Prostate gland (tissue), 2 donors: ENCODE measurements at regions of chrX and their contacts with region 1.

Region 1: DNA sequence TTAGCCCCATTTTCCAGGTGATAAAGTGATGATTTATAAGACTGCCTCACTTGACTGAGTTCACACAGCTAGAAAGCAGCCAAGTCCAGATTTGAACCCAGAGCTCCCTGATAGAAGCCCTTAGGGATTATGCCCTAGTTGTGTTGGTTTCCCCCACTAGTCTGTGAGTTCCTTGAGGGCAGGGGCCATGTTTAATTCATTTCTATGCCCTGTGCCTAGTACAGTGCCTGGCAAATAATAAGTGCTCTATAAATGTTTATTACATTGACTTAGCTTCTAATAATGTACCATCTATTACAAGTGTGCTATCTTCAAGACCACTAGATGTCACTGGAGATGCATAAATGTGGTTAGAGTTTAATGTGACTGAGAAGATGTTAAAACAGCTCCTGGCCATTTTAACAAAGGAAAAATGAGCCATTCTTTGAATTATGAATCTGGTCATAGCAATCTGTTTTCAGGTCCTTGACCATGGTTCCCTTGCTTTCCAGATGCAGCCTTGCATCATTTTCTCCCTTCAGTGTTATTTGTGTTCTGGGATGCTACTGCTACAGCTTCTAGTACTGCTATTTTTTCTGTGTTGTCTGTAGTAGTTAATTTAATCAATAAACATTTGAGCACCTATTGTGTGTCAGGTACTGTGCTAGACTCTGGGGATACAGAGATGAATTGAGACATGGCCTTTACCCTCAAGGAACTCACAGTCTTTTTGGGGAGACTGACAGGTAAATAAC is 43.2 kb downstream of the SLC9A6 start:
- DNase-seq: peak; percentile 4
- H3K4me3 ChIP-seq: no peak overlapping the region
- H3K27ac ChIP-seq: no peak overlapping the region
- H3K4me1 ChIP-seq: no peaks in the 10 kb centered on the region
- H3K27me3 ChIP-seq: no peaks in the 10 kb centered on the region
- CTCF ChIP-seq: peak in 3 of 4 experiments; percentile 50 to 68 (median 62)
- POLR2A ChIP-seq: no peak

Region 2: DNA sequence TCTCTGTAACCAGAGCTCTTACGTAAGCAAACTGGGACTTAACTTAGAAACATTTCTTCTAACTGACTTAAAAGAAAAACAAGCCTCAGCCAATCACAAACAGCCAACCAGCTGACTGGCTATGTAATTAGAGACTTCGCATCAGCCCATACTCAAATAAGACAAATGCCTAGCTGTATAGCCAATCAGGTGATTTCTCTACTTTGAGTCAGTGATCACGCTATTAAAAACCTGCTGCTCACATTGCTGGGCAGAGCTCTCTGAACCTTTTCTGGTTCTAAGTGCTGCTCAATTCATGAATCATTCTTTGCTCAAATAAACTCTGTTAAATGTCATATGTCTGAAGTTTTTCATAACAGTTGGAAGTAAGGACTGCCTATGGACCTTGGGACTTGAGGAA is 616.5 kb before region 1 on chrX:
- intact Hi-C with region 1: no loop called
- DNase-seq: no peak
- H3K4me3 ChIP-seq: no peak overlapping the region
- H3K27ac ChIP-seq: no peak overlapping the region
- H3K4me1 ChIP-seq: no peaks in the 10 kb centered on the region
- H3K27me3 ChIP-seq: no peaks in the 10 kb centered on the region
- CTCF ChIP-seq: no peak
- POLR2A ChIP-seq: no peak

Region 3: DNA sequence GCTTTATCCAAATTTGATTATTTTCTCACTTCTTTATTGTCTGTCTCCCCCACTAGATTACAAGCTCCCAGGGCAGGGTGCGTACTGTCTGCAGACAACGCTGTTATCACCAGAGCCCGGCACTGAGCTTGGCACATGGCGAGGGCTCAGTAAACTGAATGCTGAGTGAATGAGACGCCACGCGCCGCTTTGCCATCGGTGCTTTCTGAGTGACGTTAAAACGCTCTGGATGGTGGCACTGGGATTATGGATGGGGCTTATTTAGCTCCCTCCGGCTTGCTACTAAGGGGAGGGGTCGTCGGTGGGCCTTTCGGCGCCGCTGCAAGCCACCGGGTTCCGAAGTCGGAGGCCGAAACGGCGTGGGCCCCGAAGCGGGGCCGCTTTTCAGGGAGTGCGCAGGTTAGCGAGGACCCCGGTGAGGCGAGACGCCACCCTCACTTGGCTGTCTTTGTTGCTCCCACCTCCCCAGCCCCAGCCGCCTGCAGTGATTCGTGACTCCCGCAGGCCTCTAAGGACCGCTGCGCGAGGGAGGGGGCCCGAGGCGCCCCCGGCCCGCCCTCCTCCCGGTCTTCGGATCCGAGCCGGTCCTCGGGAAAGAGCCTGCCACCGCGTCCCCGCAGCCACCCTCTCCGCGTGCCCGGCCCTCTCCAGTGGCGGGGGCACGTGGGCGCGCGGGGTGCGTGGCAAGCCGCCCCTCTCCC is 118.3 kb after region 1 on chrX:
- intact Hi-C with region 1: no loop called
- DNase-seq: no peak
- H3K4me3 ChIP-seq: peak overlapping the region; percentile 43 to 46
- H3K27ac ChIP-seq: peak overlapping the region in 1 of 2 donors; percentile 39
- H3K4me1 ChIP-seq: no peaks in the 10 kb centered on the region
- H3K27me3 ChIP-seq: no peaks in the 10 kb centered on the region
- CTCF ChIP-seq: no peak
- POLR2A ChIP-seq: no peak

Region 4: GRCh38 chrX:136227948-136228838 is 199.8 kb after region 1 on chrX:
- intact Hi-C with region 1: no loop called
- DNase-seq: no peak
- H3K4me3 ChIP-seq: no peak overlapping the region
- H3K27ac ChIP-seq: no peak overlapping the region
- H3K4me1 ChIP-seq: no peaks in the 10 kb centered on the region
- H3K27me3 ChIP-seq: no peaks in the 10 kb centered on the region
- CTCF ChIP-seq: no peak
- POLR2A ChIP-seq: no peak

Region 5: GRCh38 chrX:136268051-136269048 is 239.9 kb after region 1 on chrX:
- intact Hi-C with region 1: loop called (anchors 5 kb)
- DNase-seq: peak; percentile 4
- H3K4me3 ChIP-seq: no peak overlapping the region
- H3K27ac ChIP-seq: no peak overlapping the region
- H3K4me1 ChIP-seq: no peaks in the 10 kb centered on the region
- H3K27me3 ChIP-seq: no peaks in the 10 kb centered on the region
- CTCF ChIP-seq: peak in 3 of 4 experiments; percentile 28 to 49 (median 44)
- POLR2A ChIP-seq: no peak